A673 (cell line): ENCODE measurements at regions of chr7 and their contacts with region 1.

Region 1: DNA sequence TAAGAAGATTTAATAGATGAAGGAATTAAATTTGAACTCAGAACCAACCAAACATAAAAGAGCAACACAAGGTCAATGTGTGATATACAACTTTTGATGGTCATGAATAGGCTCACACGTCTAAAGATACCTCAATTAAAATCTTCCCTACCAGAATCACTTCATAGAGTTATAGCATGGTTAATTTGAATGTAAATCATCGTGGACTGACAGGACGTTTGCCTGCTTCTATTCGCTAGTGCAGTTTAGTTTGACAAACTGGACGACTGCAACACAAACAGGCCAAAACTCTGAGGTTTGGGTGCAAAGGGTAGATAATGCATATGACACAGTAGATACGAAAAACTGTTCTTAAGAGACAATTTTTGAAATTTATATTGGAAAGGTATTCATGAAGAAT is 32.5 kb upstream of the CNTNAP2 start:
- DNase-seq: no peak
- H3K4me3 ChIP-seq: no peak overlapping the region
- H3K27ac ChIP-seq: no peak overlapping the region
- H3K4me1 ChIP-seq: no peaks in the 10 kb centered on the region
- H3K27me3 ChIP-seq: no peaks in the 10 kb centered on the region
- CTCF ChIP-seq: no peak

Region 2: DNA sequence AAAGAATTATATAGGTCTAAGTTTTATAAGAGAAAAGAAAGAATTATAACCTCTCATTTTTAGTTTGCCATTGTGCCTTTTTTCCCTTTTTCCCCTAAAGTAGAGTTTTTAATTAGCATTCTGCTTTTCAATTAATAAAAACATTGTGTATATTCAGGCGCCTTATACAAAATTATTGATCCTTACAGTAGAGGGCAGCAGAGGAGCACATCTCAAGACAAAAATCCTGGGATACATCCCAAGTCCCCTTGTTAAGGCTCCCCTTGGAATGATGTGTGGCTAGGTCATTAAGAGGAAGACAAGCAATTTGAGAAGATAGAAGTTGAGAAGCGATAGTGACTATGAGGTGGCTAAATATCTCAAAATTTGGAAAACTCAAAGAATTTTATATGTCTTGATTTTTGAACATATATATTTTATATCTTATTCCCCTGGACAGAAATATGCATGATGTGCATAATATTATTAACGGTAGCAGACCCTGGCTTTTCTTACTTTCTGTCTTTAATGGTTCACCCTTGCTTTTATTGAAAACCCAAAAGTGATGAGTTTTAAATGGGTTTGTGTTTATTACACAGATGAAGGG is 1229.2 kb before region 1 on chr7:
- CTCF ChIA-PET with region 1: no interaction called
- POLR2A ChIA-PET with region 1: no interaction called
- intact Hi-C with region 1: loop called (anchors 5 kb)
- DNase-seq: peak; percentile 51
- H3K4me3 ChIP-seq: no peak overlapping the region
- H3K27ac ChIP-seq: no peak overlapping the region
- H3K4me1 ChIP-seq: no peaks in the 10 kb centered on the region
- H3K27me3 ChIP-seq: peaks cover 2% of the 10 kb centered on the region
- CTCF ChIP-seq: peak; percentile 70

Region 3: DNA sequence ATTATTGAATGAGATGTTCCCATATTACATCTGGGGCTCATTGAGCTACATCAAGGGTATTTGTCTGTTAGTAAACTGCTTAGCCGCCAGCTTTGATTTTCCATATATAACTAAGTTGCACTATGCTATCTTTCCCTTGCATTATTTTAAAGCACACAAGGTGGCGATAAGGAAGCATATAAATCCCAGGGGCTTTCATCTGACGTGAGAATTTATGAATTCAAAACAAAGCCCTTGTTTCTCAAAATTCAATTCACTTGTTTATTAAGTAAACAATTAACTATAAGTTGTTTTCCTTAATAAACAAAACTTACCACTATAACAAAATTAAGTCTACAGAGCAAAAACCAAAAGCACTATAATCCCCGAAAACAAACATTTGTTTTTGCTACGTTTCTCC is 914.1 kb before region 1 on chr7:
- CTCF ChIA-PET with region 1: no interaction called
- POLR2A ChIA-PET with region 1: no interaction called
- intact Hi-C with region 1: loop called (anchors 10 kb)
- DNase-seq: peak; percentile 15
- H3K4me3 ChIP-seq: no peak overlapping the region
- H3K27ac ChIP-seq: no peak overlapping the region
- H3K4me1 ChIP-seq: no peaks in the 10 kb centered on the region
- H3K27me3 ChIP-seq: no peaks in the 10 kb centered on the region
- CTCF ChIP-seq: peak; percentile 38; the same call in 1 of the 2 replicates

Region 4: DNA sequence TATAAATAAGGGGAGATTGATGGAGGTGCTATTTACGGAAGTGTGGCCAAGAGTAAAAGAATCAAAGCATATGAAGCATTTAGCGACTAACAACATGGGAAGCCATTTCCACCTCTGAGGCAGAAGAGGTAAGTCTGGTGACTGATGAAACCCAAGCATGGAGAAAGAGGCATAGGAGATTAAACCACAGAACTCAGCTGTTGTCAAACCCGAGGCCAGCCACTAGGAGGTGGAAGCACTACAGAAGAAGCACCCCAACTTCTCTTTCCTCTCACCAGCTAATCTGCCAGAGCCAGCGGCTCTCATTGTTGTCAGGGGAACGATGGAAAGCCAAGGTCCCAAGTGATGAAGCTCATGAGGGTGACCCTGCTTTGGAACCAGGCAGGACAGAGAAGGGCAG is 12.9 kb after region 1 on chr7:
- CTCF ChIA-PET with region 1: no interaction called
- POLR2A ChIA-PET with region 1: no interaction called
- intact Hi-C with region 1: no loop called
- DNase-seq: peak; percentile 17
- H3K4me3 ChIP-seq: no peak overlapping the region
- H3K27ac ChIP-seq: no peak overlapping the region
- H3K4me1 ChIP-seq: no peaks in the 10 kb centered on the region
- H3K27me3 ChIP-seq: no peaks in the 10 kb centered on the region
- CTCF ChIP-seq: peak; percentile 36; the same call in 1 of the 2 replicates

Region 5: DNA sequence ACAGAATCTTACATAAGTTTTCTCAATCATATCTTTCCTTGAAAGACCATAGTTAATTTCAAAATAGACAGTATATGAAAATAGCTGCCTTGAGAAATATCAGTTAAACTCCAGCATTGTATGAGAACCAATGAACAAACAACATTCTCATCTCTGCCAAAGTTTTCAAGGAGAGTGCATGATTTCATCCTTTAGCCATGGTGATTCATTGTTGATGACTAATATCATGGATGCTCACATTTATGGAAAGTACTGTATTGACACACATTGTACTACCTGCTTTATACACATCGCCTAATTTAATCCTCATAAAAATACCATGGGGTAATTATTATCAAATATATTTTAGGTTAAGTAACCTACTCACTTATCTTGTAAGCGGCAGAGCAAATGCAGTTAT is 282.9 kb after region 1 on chr7:
- CTCF ChIA-PET with region 1: no interaction called
- POLR2A ChIA-PET with region 1: no interaction called
- intact Hi-C with region 1: no loop called
- DNase-seq: no peak
- H3K4me3 ChIP-seq: no peak overlapping the region
- H3K27ac ChIP-seq: no peak overlapping the region
- H3K4me1 ChIP-seq: no peaks in the 10 kb centered on the region
- H3K27me3 ChIP-seq: no peaks in the 10 kb centered on the region
- CTCF ChIP-seq: no peak